Right ventricle myocardium superior (tissue), 1 donor: ENCODE measurements at regions of chr16 and their contacts with region 1.

Region 1: DNA sequence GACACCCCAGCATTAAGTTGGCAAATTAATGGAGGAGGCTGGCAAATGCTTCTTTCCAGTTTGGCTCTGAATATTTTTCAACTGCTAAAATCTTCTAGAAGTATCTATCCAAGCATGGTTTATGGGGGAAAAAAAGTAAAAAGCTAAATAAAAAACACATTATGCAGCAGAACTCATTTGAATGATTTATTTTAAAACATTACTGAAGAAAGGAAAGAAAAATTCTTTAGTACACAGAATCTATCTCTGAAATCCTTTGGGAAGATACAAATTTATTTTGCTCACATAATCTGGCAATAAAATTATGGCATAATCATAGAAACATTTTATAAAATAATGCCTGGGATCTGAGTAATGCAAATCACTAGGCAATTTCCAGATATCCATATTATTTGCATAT is 328.1 kb upstream of the MON1B start:
- DNase-seq: no peak
- ATAC-seq: no peak

Region 2: GRCh38 chr16:76474048-76474447 is 388.9 kb before region 1 on chr16:
- intact Hi-C with region 1: no loop called
- DNase-seq: no peak
- ATAC-seq: no peak

Region 3: GRCh38 chr16:76835339-76835738 is 27.6 kb before region 1 on chr16:
- intact Hi-C with region 1: loop called (anchors 2 kb)
- DNase-seq: no peak
- ATAC-seq: no peak